BJ (cell line): ENCODE measurements at regions of chr14 and their contacts with region 1.

Region 1: GRCh38 chr14:68939893-68940613 is 39.0 kb downstream of the ACTN1 start:
- DNase-seq: peak; percentile 92
- H3K4me3 ChIP-seq: no peak overlapping the region
- H3K27me3 ChIP-seq: no peaks in the 10 kb centered on the region
- CTCF ChIP-seq: no peak

Region 2: DNA sequence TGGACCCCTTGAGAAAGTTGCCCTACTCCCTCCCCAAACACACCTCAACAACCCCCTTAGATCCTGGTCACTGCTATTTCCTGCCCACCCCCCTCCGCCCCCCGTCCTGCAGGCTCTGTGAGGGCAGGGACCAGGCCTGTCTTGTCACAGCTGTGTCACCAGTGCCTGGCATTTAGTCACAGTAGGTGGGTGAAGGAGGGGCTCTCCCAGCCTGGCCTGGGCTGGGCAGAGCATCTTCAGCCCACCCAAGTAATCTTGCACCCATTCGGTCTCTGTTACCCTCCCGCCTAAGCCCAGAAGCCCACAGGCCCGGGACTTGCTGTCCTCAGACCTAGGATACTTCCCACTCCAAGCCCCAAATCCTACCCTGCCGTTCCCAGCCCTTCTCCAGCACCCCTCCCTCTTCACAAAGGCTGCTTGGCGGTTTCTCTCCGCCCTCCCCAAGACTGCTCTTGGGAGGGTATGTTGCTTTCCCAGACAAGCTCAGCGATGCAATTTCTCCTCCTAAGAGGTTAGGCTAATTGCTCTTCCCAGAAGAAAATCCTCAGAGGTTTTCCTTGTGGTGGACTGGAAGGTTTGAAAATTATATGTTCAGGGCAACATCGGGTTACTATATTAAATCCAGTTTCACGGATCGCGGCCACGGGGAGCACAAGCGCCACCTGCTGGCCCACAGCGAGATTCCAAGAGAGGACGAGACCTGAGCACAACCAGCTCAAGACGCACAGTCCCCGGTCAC is 96.4 kb before region 1 on chr14:
- CTCF ChIA-PET with region 1: no interaction called
- POLR2A ChIA-PET with region 1: no interaction called
- DNase-seq: no peak
- H3K4me3 ChIP-seq: no peak overlapping the region
- H3K27me3 ChIP-seq: no peaks in the 10 kb centered on the region
- CTCF ChIP-seq: peak; percentile 94

Region 3: DNA sequence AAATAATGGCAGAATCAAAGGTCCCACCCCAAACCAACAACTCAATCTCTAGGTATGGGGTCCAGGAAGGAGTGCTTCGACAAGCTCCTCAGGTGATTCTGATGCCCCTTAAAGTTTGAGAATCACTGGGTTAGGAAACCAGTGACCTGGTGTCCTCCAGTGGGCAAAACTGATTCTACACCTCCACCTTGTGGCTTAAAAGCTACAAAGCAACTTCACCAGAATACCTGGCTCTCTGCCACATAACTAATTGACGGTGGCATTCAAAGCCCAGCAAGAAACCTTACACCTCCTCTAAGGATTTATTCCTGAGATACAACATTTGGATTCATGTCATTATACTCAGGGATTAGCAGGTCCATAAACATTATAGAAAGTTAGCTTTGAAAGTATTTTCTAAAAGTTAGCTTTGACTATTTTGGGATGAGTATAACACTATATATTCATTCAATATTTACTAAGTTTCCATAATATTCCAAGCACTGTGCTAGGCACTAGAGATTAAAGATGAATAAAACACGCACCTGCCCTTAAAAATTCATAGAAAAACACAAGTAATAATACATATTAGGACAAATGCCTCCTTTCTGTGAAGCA is 167.5 kb after region 1 on chr14:
- CTCF ChIA-PET with region 1: interaction called, 13 read pairs
- POLR2A ChIA-PET with region 1: interaction called, 3 read pairs
- DNase-seq: no peak
- H3K4me3 ChIP-seq: no peak overlapping the region
- H3K27me3 ChIP-seq: no peaks in the 10 kb centered on the region
- CTCF ChIP-seq: peak; percentile 65